ENCODE measurements at regions of chr11 and their contacts with region 1.

Region 1: GRCh38 chr11:59598961-59599360 is 16.6 kb downstream of the OSBP start:
- DNase-seq: no peak
- H3K4me3 ChIP-seq: no peak overlapping the region
- H3K27ac ChIP-seq: no peak overlapping the region
- H3K4me1 ChIP-seq: no peaks in the 10 kb centered on the region
- H3K27me3 ChIP-seq: no peaks in the 10 kb centered on the region
- CTCF ChIP-seq: no peak

Region 2: GRCh38 chr11:59654893-59655292 is 55.9 kb after region 1 on chr11:
- CTCF ChIA-PET with region 1: no interaction called
- POLR2A ChIA-PET with region 1: no interaction called
- intact Hi-C with region 1: loop called (anchors 5 kb)
- DNase-seq: no peak
- H3K4me3 ChIP-seq: no peak overlapping the region
- H3K27ac ChIP-seq: no peak overlapping the region
- H3K4me1 ChIP-seq: no peaks in the 10 kb centered on the region
- H3K27me3 ChIP-seq: no peaks in the 10 kb centered on the region
- CTCF ChIP-seq: no peak

Region 3: GRCh38 chr11:60064111-60064510 is 465.1 kb after region 1 on chr11:
- CTCF ChIA-PET with region 1: no interaction called
- POLR2A ChIA-PET with region 1: no interaction called
- intact Hi-C with region 1: no loop called
- DNase-seq: no peak
- H3K4me3 ChIP-seq: no peak overlapping the region
- H3K27ac ChIP-seq: no peak overlapping the region
- H3K4me1 ChIP-seq: no peaks in the 10 kb centered on the region
- H3K27me3 ChIP-seq: no peaks in the 10 kb centered on the region
- CTCF ChIP-seq: no peak